ENCODE measurements at regions of chr3 and their contacts with region 1.

Region 1: DNA sequence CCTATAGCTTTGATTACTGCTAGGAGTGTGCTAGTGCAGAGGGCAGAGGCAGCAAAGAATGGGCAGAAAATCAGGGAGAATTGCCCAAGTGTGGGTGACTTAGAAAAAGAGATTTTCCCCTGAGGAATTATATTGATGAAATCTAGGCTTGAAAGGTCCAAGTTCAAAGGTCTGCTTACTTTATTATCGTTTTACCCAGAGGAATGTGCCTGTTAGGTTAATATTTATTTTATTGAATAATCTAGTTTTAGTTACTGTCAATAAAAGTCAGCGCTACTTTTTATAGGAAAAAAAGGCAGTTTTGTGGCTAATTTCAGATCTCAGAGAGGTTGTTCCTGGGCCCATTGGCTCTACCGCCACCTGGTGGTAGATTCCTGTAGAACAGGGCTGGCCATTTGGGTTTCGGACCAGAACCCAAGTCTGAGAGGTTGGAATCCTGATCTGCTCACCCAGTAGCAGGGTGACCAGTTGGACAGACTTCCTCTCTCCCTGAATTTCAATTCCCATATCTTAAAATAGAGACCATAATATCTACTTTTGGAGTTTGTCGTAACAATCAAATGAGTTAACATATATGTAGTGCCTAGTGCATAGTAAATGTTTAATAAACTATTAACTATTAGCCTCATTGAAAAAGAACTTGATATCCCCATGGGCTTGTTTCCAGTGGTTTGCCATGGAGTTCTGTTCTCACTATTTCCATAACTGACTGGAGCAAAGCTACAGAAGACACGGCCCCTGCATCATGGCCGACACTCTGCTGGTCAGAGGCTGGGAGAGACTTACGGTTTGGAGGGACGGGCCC is 62.7 kb upstream of the ZNF148 start:
- DNase-seq: peak; percentile 33
- ATAC-seq: no peak
- H3K4me3 ChIP-seq: no peak overlapping the region
- H3K27ac ChIP-seq: 0 out of 2 replicates have a peak overlapping the region, but pooled peaks have one; percentile 10
- H3K4me1 ChIP-seq: peaks cover 3% of the 10 kb centered on the region; the same call in 1 of the 2 replicates
- H3K27me3 ChIP-seq: no peaks in the 10 kb centered on the region
- CTCF ChIP-seq: peak; percentile 99

Region 2: GRCh38 chr3:124928333-124929202 is 509.3 kb before region 1 on chr3:
- CTCF ChIA-PET with region 1: interaction called, 5 read pairs
- POLR2A ChIA-PET with region 1: no interaction called
- in situ Hi-C with region 1: no loop called
- intact Hi-C with region 1: loop called (anchors 5 kb)
- DNase-seq: peak; percentile 54
- ATAC-seq: peak; percentile 91
- H3K4me3 ChIP-seq: no peak overlapping the region
- H3K27ac ChIP-seq: no peak overlapping the region
- H3K4me1 ChIP-seq: no peaks in the 10 kb centered on the region
- H3K27me3 ChIP-seq: no peaks in the 10 kb centered on the region
- CTCF ChIP-seq: peak; percentile 87

Region 3: GRCh38 chr3:124995460-124995994 is 442.3 kb before region 1 on chr3:
- CTCF ChIA-PET with region 1: interaction called, 7 read pairs
- POLR2A ChIA-PET with region 1: no interaction called
- in situ Hi-C with region 1: no loop called
- intact Hi-C with region 1: loop called (anchors 5 kb)
- DNase-seq: peak; percentile 27
- ATAC-seq: peak; percentile 90
- H3K4me3 ChIP-seq: no peak overlapping the region
- H3K27ac ChIP-seq: peak overlapping the region; percentile 25; the same call in 1 of the 2 replicates
- H3K4me1 ChIP-seq: peaks cover 14% of the 10 kb centered on the region; the same call in 1 of the 2 replicates
- H3K27me3 ChIP-seq: no peaks in the 10 kb centered on the region
- CTCF ChIP-seq: peak; percentile 85

Region 4: DNA sequence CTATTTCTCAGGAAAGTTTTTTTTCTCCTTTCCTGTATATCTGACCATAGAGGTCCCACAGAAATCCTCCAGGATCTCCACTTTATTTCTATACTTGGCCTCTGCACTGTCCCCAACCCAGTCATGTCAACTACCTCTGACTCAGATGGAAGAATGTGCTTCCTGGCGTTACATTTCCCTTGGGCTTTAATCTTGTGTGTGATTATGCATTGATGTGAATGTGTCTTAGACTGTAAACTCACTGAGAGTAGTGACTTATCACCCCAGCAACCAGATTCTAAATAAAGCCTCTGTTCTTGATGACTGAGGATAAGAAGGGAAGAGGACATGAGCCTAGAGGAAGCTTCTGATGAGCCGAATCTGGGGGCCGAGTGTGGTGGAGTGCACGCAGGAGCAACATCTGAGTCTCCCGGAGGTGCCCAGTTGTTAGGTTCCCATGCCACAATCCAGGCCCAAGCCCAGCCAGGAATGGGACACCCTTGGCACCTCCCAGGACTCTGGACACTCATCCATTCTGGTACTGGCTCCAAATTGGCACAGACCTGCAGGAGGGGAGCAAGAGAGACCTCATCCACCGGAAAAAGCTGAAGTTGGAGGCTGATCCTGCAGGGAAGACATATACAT is 350.0 kb before region 1 on chr3:
- CTCF ChIA-PET with region 1: no interaction called
- POLR2A ChIA-PET with region 1: no interaction called
- in situ Hi-C with region 1: no loop called
- intact Hi-C with region 1: no loop called
- DNase-seq: no peak
- ATAC-seq: peak; percentile 56
- H3K4me3 ChIP-seq: no peak overlapping the region
- H3K27ac ChIP-seq: peak overlapping the region; percentile 35; the same call in 1 of the 2 replicates
- H3K4me1 ChIP-seq: no peaks in the 10 kb centered on the region
- H3K27me3 ChIP-seq: no peaks in the 10 kb centered on the region
- CTCF ChIP-seq: no peak

Region 5: DNA sequence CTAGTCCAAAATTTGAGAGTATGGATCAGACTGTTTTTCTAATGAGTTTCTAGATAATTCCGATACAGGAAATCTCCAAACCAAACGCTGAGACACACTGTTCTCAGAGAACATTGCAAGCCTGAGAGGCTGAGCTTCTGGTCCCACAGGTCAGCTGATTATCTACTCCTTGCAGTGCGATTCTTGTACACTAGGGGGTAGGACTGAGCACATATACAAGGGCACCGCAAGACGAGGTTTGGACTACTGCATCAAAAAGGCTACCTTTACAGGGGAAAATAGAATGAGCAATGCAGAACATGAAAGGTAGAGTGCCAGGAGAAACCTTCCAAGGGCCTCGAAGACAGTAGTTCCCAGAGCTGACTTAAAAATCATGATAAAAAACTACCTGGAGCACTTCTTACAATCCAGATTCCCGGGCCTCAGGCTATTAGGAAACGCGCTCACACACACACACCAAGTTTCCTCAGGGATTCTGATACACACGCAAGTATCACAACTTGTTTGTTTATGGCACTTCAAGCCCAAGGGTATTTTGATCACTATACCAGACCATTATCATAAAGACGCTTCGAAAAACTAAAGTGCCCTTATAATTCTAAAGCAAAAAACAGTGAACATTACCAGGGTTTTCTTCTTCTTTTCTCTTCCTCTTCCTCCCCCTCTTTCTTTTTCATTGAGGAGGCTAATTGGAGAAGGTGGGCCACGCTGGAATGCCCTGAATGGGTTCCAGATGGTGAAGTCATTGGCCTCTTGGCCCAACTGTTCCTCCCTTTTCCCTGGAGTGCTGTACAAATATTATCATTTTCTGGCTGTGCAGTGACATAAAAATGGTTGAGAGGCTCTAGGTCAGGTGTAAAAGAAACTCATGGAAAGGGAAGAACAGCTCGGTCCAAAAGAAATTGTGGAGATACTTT is 287.1 kb before region 1 on chr3:
- CTCF ChIA-PET with region 1: no interaction called
- POLR2A ChIA-PET with region 1: no interaction called
- in situ Hi-C with region 1: no loop called
- intact Hi-C with region 1: loop called (anchors 10 kb)
- DNase-seq: peak; percentile 77
- ATAC-seq: peak; percentile 82
- H3K4me3 ChIP-seq: no peak overlapping the region
- H3K27ac ChIP-seq: peak overlapping the region; percentile 67; the same call in 1 of the 2 replicates
- H3K4me1 ChIP-seq: peaks cover 6% of the 10 kb centered on the region
- H3K27me3 ChIP-seq: no peaks in the 10 kb centered on the region
- CTCF ChIP-seq: peak; percentile 92

Region 6: GRCh38 chr3:125220727-125221429 is 217.0 kb before region 1 on chr3:
- CTCF ChIA-PET with region 1: no interaction called
- POLR2A ChIA-PET with region 1: no interaction called
- in situ Hi-C with region 1: no loop called
- intact Hi-C with region 1: loop called (anchors 10 kb)
- DNase-seq: no peak
- ATAC-seq: peak; percentile 35
- H3K4me3 ChIP-seq: no peak overlapping the region
- H3K27ac ChIP-seq: no peak overlapping the region
- H3K4me1 ChIP-seq: no peaks in the 10 kb centered on the region
- H3K27me3 ChIP-seq: no peaks in the 10 kb centered on the region
- CTCF ChIP-seq: no peak

Region 7: GRCh38 chr3:125334675-125335560 is 102.9 kb before region 1 on chr3:
- CTCF ChIA-PET with region 1: no interaction called
- POLR2A ChIA-PET with region 1: no interaction called
- in situ Hi-C with region 1: no loop called
- intact Hi-C with region 1: no loop called
- DNase-seq: no peak
- ATAC-seq: no peak
- H3K4me3 ChIP-seq: no peak overlapping the region
- H3K27ac ChIP-seq: no peak overlapping the region; the same call in 1 of the 2 replicates
- H3K4me1 ChIP-seq: peaks cover 34% of the 10 kb centered on the region; the same call in 1 of the 2 replicates
- H3K27me3 ChIP-seq: no peaks in the 10 kb centered on the region
- CTCF ChIP-seq: no peak

Region 8: DNA sequence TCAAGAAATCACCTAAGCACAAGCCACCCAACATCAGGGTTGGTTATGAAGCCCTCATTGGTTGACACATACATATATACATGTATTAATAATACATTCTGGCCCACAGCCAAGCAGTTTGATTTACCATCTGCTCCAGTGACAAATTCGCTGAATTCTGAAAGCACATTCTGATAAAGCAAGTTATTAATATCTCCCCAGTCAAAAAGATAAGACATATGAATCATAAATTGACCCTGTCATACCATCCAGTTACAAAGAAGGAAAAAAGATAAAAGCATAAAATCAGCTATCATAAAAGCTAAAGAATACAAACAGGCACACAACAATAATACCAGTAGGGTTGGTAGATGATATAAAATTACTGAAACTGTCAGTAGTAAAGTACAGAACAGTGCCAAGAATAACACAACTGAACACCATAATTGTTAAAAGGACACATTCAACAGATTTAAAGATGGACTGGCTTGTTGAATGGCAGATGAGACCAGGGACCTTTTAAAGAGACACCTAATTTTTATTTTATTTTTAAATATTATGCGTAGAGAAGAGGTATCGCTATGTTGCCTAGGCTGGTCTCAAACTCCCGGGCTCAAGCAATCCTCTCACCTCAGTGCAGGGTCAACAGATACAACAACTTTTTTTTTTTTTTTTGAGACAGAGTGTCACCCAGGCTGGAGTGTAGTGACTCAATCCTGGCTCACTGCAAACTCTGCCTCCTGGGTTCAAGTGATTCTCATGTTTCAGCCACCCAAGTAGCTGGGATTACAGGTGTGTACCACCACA is 74.5 kb after region 1 on chr3:
- CTCF ChIA-PET with region 1: no interaction called
- POLR2A ChIA-PET with region 1: no interaction called
- in situ Hi-C with region 1: no loop called
- intact Hi-C with region 1: no loop called
- DNase-seq: no peak
- ATAC-seq: no peak
- H3K4me3 ChIP-seq: no peak overlapping the region
- H3K27ac ChIP-seq: no peak overlapping the region
- H3K4me1 ChIP-seq: no peaks in the 10 kb centered on the region
- H3K27me3 ChIP-seq: no peaks in the 10 kb centered on the region
- CTCF ChIP-seq: no peak

Region 9: GRCh38 chr3:126056681-126057546 is 619.1 kb after region 1 on chr3:
- CTCF ChIA-PET with region 1: no interaction called
- POLR2A ChIA-PET with region 1: no interaction called
- in situ Hi-C with region 1: no loop called
- intact Hi-C with region 1: no loop called
- DNase-seq: no peak
- ATAC-seq: no peak
- H3K4me3 ChIP-seq: no peak overlapping the region
- H3K27ac ChIP-seq: no peak overlapping the region
- H3K4me1 ChIP-seq: no peaks in the 10 kb centered on the region
- H3K27me3 ChIP-seq: no peaks in the 10 kb centered on the region
- CTCF ChIP-seq: no peak

Measured in Panc1 (cell line).